ENCODE measurements at regions of chr1 and their contacts with region 1.

Region 1: GRCh38 chr1:200558866-200559459 is 61.6 kb downstream of the KIF14 start:
- DNase-seq: peak; percentile 51
- ATAC-seq: no peak
- H3K4me3 ChIP-seq: no peak overlapping the region
- H3K4me3 Mint-ChIP-seq: no peak overlapping the region
- H3K27ac ChIP-seq: no peak overlapping the region
- H3K27ac Mint-ChIP-seq: no peak overlapping the region
- H3K4me1 ChIP-seq: no peaks in the 10 kb centered on the region
- H3K4me1 Mint-ChIP-seq: peaks cover 1% of the 10 kb centered on the region
- H3K27me3 ChIP-seq: no peaks in the 10 kb centered on the region
- H3K27me3 Mint-ChIP-seq: no peaks in the 10 kb centered on the region
- CTCF ChIP-seq: peak; percentile 75

Region 2: DNA sequence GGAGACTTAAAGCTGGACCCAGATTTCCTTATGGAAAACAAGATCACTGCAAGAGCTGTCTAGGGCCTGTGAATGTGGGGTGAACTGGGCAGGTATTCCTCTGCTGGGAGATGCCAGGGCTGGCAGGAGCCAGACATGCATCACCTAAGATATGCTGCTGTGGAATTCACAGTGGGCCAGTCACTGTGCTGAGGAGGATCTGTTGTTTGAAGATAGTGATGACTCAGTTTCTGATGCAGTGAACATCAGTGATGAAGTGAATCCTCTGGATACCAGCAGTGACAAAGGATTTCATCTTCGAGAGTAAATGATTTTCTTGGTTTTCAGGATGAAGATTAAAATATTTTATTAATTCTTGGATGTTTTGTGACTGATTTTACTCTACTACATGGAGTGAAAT is 149.8 kb after region 1 on chr1:
- CTCF ChIA-PET with region 1: no interaction called
- POLR2A ChIA-PET with region 1: no interaction called
- intact Hi-C with region 1: no loop called
- DNase-seq: no peak
- ATAC-seq: no peak
- H3K4me3 ChIP-seq: no peak overlapping the region
- H3K4me3 Mint-ChIP-seq: no peak overlapping the region
- H3K27ac ChIP-seq: no peak overlapping the region
- H3K27ac Mint-ChIP-seq: no peak overlapping the region
- H3K4me1 ChIP-seq: no peaks in the 10 kb centered on the region
- H3K4me1 Mint-ChIP-seq: no peaks in the 10 kb centered on the region
- H3K27me3 ChIP-seq: no peaks in the 10 kb centered on the region
- H3K27me3 Mint-ChIP-seq: no peaks in the 10 kb centered on the region
- CTCF ChIP-seq: no peak

Region 3: GRCh38 chr1:200837931-200838571 is 279.1 kb after region 1 on chr1:
- CTCF ChIA-PET with region 1: interaction called, 14 read pairs
- POLR2A ChIA-PET with region 1: no interaction called
- intact Hi-C with region 1: loop called (anchors 10 kb)
- DNase-seq: peak; percentile 8
- ATAC-seq: no peak
- H3K4me3 ChIP-seq: no peak overlapping the region
- H3K4me3 Mint-ChIP-seq: no peak overlapping the region
- H3K27ac ChIP-seq: no peak overlapping the region
- H3K27ac Mint-ChIP-seq: no peak overlapping the region
- H3K4me1 ChIP-seq: no peaks in the 10 kb centered on the region
- H3K4me1 Mint-ChIP-seq: no peaks in the 10 kb centered on the region
- H3K27me3 ChIP-seq: no peaks in the 10 kb centered on the region
- H3K27me3 Mint-ChIP-seq: no peaks in the 10 kb centered on the region
- CTCF ChIP-seq: peak; percentile 73

Measured in B cell (primary cell).